ENCODE measurements at regions of chrX and their contacts with region 1.

Region 1: DNA sequence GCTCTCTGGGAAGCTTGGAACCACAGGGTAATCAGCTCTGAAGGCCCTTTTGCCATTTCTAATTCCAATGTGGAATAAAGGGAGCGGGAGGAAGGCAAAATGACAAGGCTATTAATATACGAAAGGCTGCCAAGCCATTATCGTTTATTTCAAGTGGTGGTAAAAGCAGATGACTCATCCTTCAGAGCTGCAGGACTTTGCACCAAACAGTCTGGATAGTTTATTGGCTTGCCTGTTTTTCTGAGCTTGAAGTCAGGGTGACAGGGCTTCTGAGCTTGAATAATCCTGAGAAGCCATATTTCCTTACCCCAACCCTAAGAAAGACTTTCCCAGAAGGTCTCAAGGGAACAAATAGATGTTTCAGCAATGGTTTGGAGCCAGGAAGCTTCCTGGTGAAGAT is 7.7 kb upstream of the GABRE start:
- DNase-seq: peak; percentile 54
- H3K4me3 ChIP-seq: no peak overlapping the region
- H3K27ac ChIP-seq: no peak overlapping the region
- H3K4me1 ChIP-seq: peaks cover 58% of the 10 kb centered on the region
- H3K27me3 ChIP-seq: no peaks in the 10 kb centered on the region
- CTCF ChIP-seq: no peak

Region 2: GRCh38 chrX:151871244-151871643 is 111.0 kb before region 1 on chrX:
- CTCF ChIA-PET with region 1: no interaction called
- dilution Hi-C with region 1: no loop called
- in situ Hi-C with region 1: no loop called
- intact Hi-C with region 1: loop called (anchors 10 kb)
- DNase-seq: peak; percentile 83
- H3K4me3 ChIP-seq: no peak overlapping the region
- H3K27ac ChIP-seq: peak overlapping the region; percentile 78
- H3K4me1 ChIP-seq: peaks cover 22% of the 10 kb centered on the region
- H3K27me3 ChIP-seq: no peaks in the 10 kb centered on the region
- CTCF ChIP-seq: no peak

Measured in mammary epithelial cell (primary cell).